ENCODE measurements at regions of chr6 and their contacts with region 1.

Region 1: GRCh38 chr6:24581084-24581669 is 64.8 kb downstream of the KIAA0319 start:
- DNase-seq: peak; percentile 84
- H3K4me3 ChIP-seq: no peak overlapping the region
- H3K27ac ChIP-seq: no peak overlapping the region
- H3K4me1 ChIP-seq: no peaks in the 10 kb centered on the region
- H3K27me3 ChIP-seq: no peaks in the 10 kb centered on the region
- CTCF ChIP-seq: peak; percentile 65

Region 2: GRCh38 chr6:24340998-24341938 is 239.9 kb before region 1 on chr6:
- intact Hi-C with region 1: no loop called
- DNase-seq: no peak
- H3K4me3 ChIP-seq: no peak overlapping the region
- H3K27ac ChIP-seq: no peak overlapping the region
- H3K4me1 ChIP-seq: no peaks in the 10 kb centered on the region
- H3K27me3 ChIP-seq: no peaks in the 10 kb centered on the region
- CTCF ChIP-seq: no peak

Region 3: DNA sequence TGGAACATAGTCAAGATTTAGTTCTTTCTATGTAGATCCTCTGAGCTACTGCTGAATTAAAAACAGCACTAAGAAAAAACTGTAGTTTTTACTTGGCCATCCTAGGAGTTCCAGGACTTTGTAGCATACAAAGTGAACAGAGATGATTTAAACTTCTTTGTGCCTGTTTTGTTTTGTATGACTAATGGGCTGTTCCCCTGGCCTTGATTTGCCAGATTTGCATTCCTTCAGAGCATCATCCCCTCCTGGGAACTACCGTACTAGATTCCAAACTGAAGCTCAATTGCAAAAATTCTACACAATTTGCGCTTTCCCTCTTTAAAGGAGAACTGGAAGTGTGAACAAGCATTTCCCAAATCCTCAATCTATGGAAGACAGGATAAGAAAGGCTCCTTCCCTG is 108.8 kb after region 1 on chr6:
- intact Hi-C with region 1: loop called (anchors 2 kb)
- DNase-seq: no peak
- H3K4me3 ChIP-seq: no peak overlapping the region
- H3K27ac ChIP-seq: no peak overlapping the region
- H3K4me1 ChIP-seq: no peaks in the 10 kb centered on the region
- H3K27me3 ChIP-seq: no peaks in the 10 kb centered on the region
- CTCF ChIP-seq: no peak

Region 4: GRCh38 chr6:24766680-24767462 is 185.7 kb after region 1 on chr6:
- intact Hi-C with region 1: loop called (anchors 5 kb)
- DNase-seq: no peak
- H3K4me3 ChIP-seq: no peak overlapping the region
- H3K27ac ChIP-seq: no peak overlapping the region
- H3K4me1 ChIP-seq: no peaks in the 10 kb centered on the region
- H3K27me3 ChIP-seq: no peaks in the 10 kb centered on the region
- CTCF ChIP-seq: peak; percentile 24

Measured in colonic mucosa (tissue), 4 donors.